ENCODE measurements at regions of chr10 and their contacts with region 1.

Region 1: DNA sequence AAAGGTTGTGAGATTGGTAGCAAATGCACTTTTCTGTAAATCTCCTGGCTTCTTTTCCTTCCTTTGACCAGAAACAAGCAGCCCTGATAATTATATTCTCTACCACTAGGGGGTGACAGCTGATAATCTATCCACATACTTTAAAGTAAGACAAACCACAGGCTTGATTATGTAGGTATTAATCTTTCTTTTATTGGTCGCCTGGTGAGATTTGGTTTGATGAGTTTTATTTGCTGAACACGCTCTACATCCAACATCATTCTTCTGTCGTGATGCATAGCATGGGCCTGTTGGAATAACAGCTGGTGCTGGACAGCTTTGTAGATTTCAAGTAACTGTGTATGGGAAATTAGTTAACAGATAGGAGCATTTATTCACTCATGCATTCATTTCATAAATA is 63.5 kb downstream of the ZNF365 start:
- DNase-seq: no peak
- H3K4me3 Mint-ChIP-seq: no peak overlapping the region
- H3K27ac Mint-ChIP-seq: no peak overlapping the region
- H3K4me1 Mint-ChIP-seq: peaks cover 18% of the 10 kb centered on the region
- H3K27me3 Mint-ChIP-seq: peaks cover 10% of the 10 kb centered on the region

Region 2: GRCh38 chr10:62449755-62450154 is 12.1 kb after region 1 on chr10:
- CTCF ChIA-PET with region 1: interaction called, 16 read pairs
- POLR2A ChIA-PET with region 1: no interaction called
- DNase-seq: no peak
- H3K4me3 Mint-ChIP-seq: no peak overlapping the region
- H3K27ac Mint-ChIP-seq: no peak overlapping the region
- H3K4me1 Mint-ChIP-seq: peaks cover 1% of the 10 kb centered on the region
- H3K27me3 Mint-ChIP-seq: peaks cover 7% of the 10 kb centered on the region

Region 3: GRCh38 chr10:62456611-62457101 is 19.0 kb after region 1 on chr10:
- CTCF ChIA-PET with region 1: interaction called, 12 read pairs
- POLR2A ChIA-PET with region 1: no interaction called
- DNase-seq: no peak
- H3K4me3 Mint-ChIP-seq: no peak overlapping the region
- H3K27ac Mint-ChIP-seq: no peak overlapping the region
- H3K4me1 Mint-ChIP-seq: peaks cover 25% of the 10 kb centered on the region
- H3K27me3 Mint-ChIP-seq: no peaks in the 10 kb centered on the region

Measured in activated CD4-positive, alpha-beta memory T cell treated with anti-CD3 and anti-CD28 coated beads, Interleukin-2, amount 10 ng/mL, durations not matched to agents 7 days and 5 days (primary cell).